ENCODE measurements at regions of chr9 and their contacts with region 1.

Region 1: DNA sequence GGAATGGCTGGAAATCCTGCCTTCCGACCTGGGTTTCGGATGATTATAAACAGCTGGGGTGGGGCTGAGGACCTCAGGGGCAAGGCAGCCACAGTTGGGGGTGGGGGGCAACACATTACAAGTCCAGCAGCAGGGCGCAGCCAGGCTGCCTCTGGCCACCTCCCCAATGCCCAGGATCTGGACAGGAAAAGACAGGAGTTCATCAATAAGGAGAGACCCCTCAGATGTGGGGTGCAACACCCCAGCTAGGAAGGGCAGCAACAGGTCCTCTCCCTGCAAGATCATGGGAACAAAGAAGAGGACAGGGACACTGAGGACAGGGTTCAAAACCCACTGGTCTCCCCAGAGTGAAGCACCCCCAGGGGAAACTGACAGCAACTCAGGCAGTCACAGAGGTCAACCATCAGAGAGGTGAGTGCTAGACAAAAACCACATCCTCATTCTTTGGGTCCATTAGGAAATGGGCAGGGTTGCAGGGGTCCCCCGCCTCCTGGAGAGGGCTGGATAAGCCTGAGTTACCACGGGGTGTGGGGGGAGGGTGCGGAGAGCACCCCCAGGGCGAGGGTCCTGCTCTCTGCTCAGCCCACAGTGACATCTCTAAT is 33.5 kb downstream of the SEMA4D start:
- DNase-seq: no peak
- H3K4me3 ChIP-seq: no peak overlapping the region
- H3K27ac ChIP-seq: no peak overlapping the region
- H3K4me1 ChIP-seq: no peaks in the 10 kb centered on the region
- H3K27me3 ChIP-seq: no peaks in the 10 kb centered on the region
- CTCF ChIP-seq: no peak

Region 2: DNA sequence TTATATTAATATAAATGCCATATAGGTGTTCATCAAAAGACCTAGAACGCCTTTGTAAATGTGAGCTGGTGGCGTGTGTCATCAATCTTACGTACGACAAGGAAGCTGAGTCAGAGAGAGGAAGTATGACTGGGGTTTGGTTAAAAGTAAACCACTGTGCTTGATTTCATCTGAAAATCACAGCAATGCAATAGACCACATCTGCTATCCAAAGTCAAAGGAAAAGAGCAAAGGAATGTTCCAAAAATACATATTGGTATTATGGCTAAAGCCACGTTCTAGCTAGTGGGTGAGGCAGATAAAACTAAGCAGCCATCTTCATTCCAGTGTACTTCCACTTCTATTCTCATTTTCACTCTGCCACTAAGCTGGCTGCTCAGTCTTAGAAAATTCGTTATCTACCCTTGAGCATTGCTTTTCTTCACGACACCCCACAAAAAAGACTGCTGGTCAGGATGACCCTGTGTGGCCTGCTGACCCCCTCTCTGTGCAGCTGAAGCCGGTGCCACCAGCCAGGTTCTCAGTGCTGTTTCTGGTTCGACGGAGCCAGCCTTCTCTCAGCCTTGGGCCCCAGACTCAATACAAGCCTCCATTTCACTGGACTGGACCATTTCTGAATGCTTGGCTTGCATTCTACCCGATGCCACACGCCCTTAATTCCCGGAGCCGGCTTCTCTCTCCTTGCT is 309.6 kb before region 1 on chr9:
- CTCF ChIA-PET with region 1: no interaction called
- POLR2A ChIA-PET with region 1: no interaction called
- intact Hi-C with region 1: no loop called
- DNase-seq: peak; percentile 42
- H3K4me3 ChIP-seq: no peak overlapping the region
- H3K27ac ChIP-seq: peak overlapping the region; percentile 9
- H3K4me1 ChIP-seq: peaks cover 7% of the 10 kb centered on the region
- H3K27me3 ChIP-seq: no peaks in the 10 kb centered on the region
- CTCF ChIP-seq: no peak

Region 3: GRCh38 chr9:89522261-89522958 is 58.0 kb after region 1 on chr9:
- CTCF ChIA-PET with region 1: no interaction called
- POLR2A ChIA-PET with region 1: no interaction called
- intact Hi-C with region 1: loop called (anchors 2 kb)
- DNase-seq: no peak
- H3K4me3 ChIP-seq: no peak overlapping the region
- H3K27ac ChIP-seq: no peak overlapping the region
- H3K4me1 ChIP-seq: no peaks in the 10 kb centered on the region
- H3K27me3 ChIP-seq: no peaks in the 10 kb centered on the region
- CTCF ChIP-seq: no peak

Region 4: GRCh38 chr9:89532478-89532877 is 68.1 kb after region 1 on chr9:
- CTCF ChIA-PET with region 1: no interaction called
- POLR2A ChIA-PET with region 1: no interaction called
- intact Hi-C with region 1: no loop called
- DNase-seq: no peak
- H3K4me3 ChIP-seq: no peak overlapping the region
- H3K27ac ChIP-seq: no peak overlapping the region
- H3K4me1 ChIP-seq: no peaks in the 10 kb centered on the region
- H3K27me3 ChIP-seq: no peaks in the 10 kb centered on the region
- CTCF ChIP-seq: no peak

Measured in A673 (cell line).